Activated naive CD4-positive, alpha-beta T cell treated with anti-CD3 and anti-CD28 coated beads for 36 hours (primary cell): ENCODE measurements at regions of chr1 and their contacts with region 1.

Region 1: GRCh38 chr1:64923294-64923721 is 43.0 kb downstream of the JAK1 start:
- DNase-seq: peak; percentile 72
- H3K4me3 Mint-ChIP-seq: peak overlapping the region; percentile 25
- H3K27ac Mint-ChIP-seq: peak overlapping the region; percentile 87
- H3K4me1 Mint-ChIP-seq: peaks cover 96% of the 10 kb centered on the region
- H3K27me3 Mint-ChIP-seq: no peaks in the 10 kb centered on the region

Region 2: DNA sequence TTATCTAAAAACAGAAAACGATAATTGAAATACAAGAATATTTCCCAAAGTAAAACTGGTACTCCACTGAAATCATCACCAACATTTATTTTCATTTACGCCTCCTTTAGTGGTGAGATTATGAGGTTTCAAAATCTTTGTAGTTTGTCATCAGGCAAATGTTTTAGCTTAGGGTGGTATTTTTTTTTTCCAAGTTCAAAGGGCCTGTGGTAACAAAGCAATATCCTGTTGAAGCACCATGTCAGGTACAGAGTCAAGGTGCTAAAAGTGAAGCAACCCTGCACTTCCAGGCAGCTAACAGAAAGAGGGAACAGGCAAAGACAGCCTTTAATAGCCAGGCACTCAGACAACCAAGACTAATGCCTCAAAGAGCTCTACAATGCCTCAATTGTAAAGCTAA is 46.2 kb before region 1 on chr1:
- CTCF ChIA-PET with region 1: no interaction called
- intact Hi-C with region 1: loop called (anchors 1 kb)
- DNase-seq: peak; percentile 68
- H3K4me3 Mint-ChIP-seq: no peak overlapping the region
- H3K27ac Mint-ChIP-seq: peak overlapping the region; percentile 76
- H3K4me1 Mint-ChIP-seq: peaks cover 58% of the 10 kb centered on the region
- H3K27me3 Mint-ChIP-seq: no peaks in the 10 kb centered on the region

Region 3: GRCh38 chr1:64898107-64898845 is 25.0 kb before region 1 on chr1:
- CTCF ChIA-PET with region 1: interaction called, 4 read pairs
- intact Hi-C with region 1: loop called (anchors 1 kb)
- DNase-seq: peak; percentile 68
- H3K4me3 Mint-ChIP-seq: no peak overlapping the region
- H3K27ac Mint-ChIP-seq: no peak overlapping the region
- H3K4me1 Mint-ChIP-seq: peaks cover 92% of the 10 kb centered on the region
- H3K27me3 Mint-ChIP-seq: no peaks in the 10 kb centered on the region

Region 4: DNA sequence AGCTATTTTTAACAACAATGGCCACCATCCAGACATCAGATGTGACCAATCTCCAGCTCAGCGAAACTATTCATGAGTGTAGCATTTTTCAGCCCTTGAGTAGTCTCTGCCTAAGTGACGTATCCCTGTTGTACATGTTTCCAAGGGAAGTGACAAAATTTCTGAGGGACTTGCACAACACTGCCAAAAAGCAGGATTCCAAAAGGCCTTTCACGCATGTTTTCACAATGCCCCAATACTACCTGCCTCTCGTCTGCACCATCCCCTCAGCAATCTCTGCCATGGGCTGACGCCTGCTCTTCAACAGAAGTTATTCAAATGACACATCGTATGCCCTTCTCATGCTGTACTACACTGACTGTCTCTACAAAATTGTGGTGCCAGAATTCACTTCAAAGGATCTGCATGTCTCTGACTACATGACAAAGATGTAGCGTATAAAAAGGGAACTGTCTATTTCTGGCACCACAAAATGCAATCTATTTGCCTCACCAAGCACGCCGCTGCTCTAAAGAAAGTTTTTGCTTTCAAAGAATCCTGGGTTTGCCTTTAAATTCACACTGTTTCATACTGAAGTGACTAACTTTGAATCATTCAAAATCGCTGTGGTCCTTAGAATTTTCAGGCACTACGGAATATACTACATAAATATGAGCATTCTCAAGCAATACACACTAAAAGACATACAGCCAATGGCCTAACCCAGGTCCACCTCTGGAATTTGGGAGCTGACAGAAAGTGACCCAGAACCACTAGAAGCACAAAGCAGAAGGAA is 10.2 kb after region 1 on chr1:
- CTCF ChIA-PET with region 1: interaction called, 3 read pairs
- intact Hi-C with region 1: loop called (anchors 1 kb)
- DNase-seq: peak; percentile 56
- H3K4me3 Mint-ChIP-seq: peak overlapping the region; percentile 33
- H3K27ac Mint-ChIP-seq: peak overlapping the region; percentile 24
- H3K4me1 Mint-ChIP-seq: peaks cover 79% of the 10 kb centered on the region
- H3K27me3 Mint-ChIP-seq: no peaks in the 10 kb centered on the region

Region 5: GRCh38 chr1:64948905-64949833 is 25.9 kb after region 1 on chr1:
- CTCF ChIA-PET with region 1: no interaction called
- intact Hi-C with region 1: loop called (anchors 1 kb)
- DNase-seq: peak; percentile 83
- H3K4me3 Mint-ChIP-seq: peak overlapping the region; percentile 53
- H3K27ac Mint-ChIP-seq: peak overlapping the region; percentile 94
- H3K4me1 Mint-ChIP-seq: peaks cover 79% of the 10 kb centered on the region
- H3K27me3 Mint-ChIP-seq: no peaks in the 10 kb centered on the region

Region 6: GRCh38 chr1:65002508-65003315 is 79.4 kb after region 1 on chr1:
- CTCF ChIA-PET with region 1: no interaction called
- intact Hi-C with region 1: loop called (anchors 1 kb)
- DNase-seq: peak; percentile 81
- H3K4me3 Mint-ChIP-seq: peak overlapping the region; percentile 82
- H3K27ac Mint-ChIP-seq: peak overlapping the region; percentile 88
- H3K4me1 Mint-ChIP-seq: peaks cover 35% of the 10 kb centered on the region
- H3K27me3 Mint-ChIP-seq: no peaks in the 10 kb centered on the region

Region 7: DNA sequence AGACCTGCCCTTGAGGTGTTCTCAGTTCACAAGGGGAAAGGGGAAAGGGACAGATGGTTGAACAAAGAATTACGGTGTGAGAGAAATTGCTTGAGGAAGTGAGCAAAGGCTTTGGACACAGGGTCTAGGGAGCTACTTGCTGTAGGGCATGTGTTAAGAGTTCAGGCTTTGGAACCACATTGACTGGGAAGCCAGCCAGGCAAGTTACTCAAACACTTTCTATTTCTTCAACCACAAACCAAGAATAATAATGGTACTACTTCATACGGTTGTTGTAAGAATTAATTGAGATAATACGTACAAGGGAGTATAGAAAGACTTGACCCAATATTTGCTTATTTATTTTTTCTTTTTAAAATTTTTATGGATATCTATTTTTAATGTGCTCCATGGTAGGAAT is 251.3 kb after region 1 on chr1:
- CTCF ChIA-PET with region 1: no interaction called
- intact Hi-C with region 1: no loop called
- DNase-seq: no peak
- H3K4me3 Mint-ChIP-seq: no peak overlapping the region
- H3K27ac Mint-ChIP-seq: no peak overlapping the region
- H3K4me1 Mint-ChIP-seq: no peaks in the 10 kb centered on the region
- H3K27me3 Mint-ChIP-seq: no peaks in the 10 kb centered on the region